ENCODE measurements at regions of chr1 and their contacts with region 1.

Region 1: GRCh38 chr1:2194898-2195673 is 514 bp upstream of the FAAP20 start:
- DNase-seq: peak; percentile 86

Region 2: DNA sequence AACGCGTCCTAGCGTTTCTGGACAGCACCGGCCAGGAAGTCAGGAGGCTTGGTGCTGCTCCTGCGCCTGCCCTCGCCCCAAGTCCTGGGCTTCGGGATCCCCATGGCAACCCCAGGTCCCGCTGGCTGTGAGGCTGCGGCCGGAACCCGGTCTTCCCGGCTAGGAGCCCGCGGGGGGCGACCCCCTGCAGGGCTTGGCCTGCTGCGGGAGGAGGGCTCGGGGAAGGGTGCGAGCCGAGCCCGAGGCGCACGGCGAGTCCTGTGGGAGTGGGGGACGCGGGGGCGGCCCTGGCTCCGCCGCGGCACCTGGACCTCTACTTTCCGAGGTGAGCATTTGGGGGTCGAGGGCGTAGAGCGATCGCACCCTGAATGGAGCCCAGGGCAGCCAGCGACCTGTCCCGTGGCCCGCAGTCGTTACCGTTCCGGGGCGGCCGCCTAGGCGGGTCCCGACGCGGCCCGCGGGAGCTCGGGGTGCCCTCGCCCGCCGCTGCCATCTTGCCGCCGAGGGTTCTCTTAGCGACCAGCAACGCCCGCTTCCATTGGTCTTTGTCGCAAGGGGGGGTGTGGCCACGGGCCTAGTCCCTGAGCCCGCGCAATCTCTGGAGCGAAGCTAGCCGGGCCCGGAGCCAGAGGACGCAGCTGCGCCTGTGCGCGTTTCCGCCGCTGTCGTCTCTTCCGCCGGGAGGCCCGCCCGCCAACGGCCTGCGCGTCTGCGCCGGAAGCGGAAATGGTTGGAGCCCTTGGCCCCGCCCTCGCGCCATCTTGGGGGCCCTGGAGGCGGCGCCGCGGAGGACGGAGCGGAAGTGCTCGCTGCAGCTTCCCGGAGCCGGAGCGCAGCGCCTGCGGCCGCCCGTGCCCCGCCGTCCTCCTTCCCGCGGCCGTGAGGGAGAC is 196.2 kb after region 1 on chr1 and contains the starts of genes MORN1 and RER1:
- in situ Hi-C with region 1: loop called (anchors 10 kb)
- DNase-seq: peak; percentile 97
- total RNA-seq, gene MORN1: 10.3 and 20.3 TPM in 2 replicates
- total RNA-seq, gene RER1: 55.7 and 105 TPM in 2 replicates